AG04450 (cell line): ENCODE measurements at regions of chr7 and their contacts with region 1.

Region 1: DNA sequence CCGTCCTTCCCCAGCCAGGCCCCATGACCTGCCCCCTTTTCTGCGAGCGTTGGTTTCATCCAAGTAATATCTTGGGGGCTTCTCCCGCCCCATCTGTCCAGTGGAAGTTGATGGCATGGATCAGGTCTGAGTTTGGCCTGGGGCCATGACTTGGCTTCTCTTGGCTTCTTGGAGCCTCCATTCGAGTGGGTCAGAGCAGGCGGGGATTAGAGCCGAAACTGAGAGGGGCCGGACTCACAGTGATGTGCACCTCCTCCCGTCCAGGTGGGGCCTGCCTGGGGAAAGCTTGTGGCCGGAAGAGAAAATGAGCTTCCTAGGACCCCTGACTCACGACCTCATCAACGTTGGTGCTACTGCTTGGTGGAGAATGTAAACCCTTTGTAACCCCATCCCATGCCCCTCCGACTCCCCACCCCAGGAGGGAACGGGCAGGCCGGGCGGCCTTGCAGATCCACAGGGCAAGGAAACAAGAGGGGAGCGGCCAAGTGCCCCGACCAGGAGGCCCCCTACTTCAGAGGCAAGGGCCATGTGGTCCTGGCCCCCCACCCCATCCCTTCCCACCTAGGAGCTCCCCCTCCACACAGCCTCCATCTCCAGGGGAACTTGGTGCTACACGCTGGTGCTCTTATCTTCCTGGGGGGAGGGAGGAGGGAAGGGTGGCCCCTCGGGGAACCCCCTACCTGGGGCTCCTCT is 15.1 kb upstream of the LIMK1 start:
- DNase-seq: no peak
- H3K4me3 ChIP-seq: no peak overlapping the region
- H3K27ac ChIP-seq: no peak overlapping the region
- H3K27me3 ChIP-seq: no peaks in the 10 kb centered on the region
- CTCF ChIP-seq: no peak

Region 2: GRCh38 chr7:74002474-74003017 is 66.0 kb before region 1 on chr7:
- CTCF ChIA-PET with region 1: interaction called, 10 read pairs
- POLR2A ChIA-PET with region 1: no interaction called
- DNase-seq: peak; percentile 68
- H3K4me3 ChIP-seq: no peak overlapping the region
- H3K27ac ChIP-seq: peak overlapping the region; percentile 87
- H3K27me3 ChIP-seq: no peaks in the 10 kb centered on the region
- CTCF ChIP-seq: no peak

Region 3: GRCh38 chr7:74083117-74083876 is 14.8 kb after region 1 on chr7 and contains the start of gene LIMK1:
- CTCF ChIA-PET with region 1: interaction called, 18 read pairs
- POLR2A ChIA-PET with region 1: interaction called, 3 read pairs
- DNase-seq: peak; percentile 42
- H3K4me3 ChIP-seq: peak within 1 kb of the TSS; percentile 69
- H3K27ac ChIP-seq: peak within 1 kb of the TSS; percentile 73
- H3K27me3 ChIP-seq: no peaks in the 10 kb centered on the region
- CTCF ChIP-seq: no peak
- polyA plus RNA-seq, gene LIMK1: 33.0 and 52.8 TPM in 2 replicates

Region 4: DNA sequence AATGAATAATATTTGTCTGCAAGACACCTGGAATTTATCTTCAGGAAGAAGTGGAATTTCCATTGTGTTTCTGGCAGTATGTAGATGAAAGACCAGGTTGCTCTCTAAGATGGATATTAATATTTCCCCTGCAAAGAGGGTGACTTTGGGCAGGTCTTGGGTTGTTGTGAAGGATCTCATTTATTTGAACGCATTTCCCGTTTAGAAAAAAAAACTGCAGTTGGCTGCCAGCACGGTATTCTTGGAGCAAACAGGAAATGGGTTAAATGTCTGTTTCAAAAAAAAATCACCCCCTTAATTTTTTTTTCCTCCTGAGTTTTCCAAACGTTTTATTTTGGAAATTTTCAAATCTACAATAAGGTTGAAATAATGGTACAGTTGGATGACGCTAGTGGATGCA is 117.1 kb after region 1 on chr7:
- CTCF ChIA-PET with region 1: interaction called, 11 read pairs
- POLR2A ChIA-PET with region 1: no interaction called
- DNase-seq: no peak
- H3K4me3 ChIP-seq: no peak overlapping the region
- H3K27ac ChIP-seq: no peak overlapping the region
- H3K27me3 ChIP-seq: no peaks in the 10 kb centered on the region
- CTCF ChIP-seq: no peak

Region 5: DNA sequence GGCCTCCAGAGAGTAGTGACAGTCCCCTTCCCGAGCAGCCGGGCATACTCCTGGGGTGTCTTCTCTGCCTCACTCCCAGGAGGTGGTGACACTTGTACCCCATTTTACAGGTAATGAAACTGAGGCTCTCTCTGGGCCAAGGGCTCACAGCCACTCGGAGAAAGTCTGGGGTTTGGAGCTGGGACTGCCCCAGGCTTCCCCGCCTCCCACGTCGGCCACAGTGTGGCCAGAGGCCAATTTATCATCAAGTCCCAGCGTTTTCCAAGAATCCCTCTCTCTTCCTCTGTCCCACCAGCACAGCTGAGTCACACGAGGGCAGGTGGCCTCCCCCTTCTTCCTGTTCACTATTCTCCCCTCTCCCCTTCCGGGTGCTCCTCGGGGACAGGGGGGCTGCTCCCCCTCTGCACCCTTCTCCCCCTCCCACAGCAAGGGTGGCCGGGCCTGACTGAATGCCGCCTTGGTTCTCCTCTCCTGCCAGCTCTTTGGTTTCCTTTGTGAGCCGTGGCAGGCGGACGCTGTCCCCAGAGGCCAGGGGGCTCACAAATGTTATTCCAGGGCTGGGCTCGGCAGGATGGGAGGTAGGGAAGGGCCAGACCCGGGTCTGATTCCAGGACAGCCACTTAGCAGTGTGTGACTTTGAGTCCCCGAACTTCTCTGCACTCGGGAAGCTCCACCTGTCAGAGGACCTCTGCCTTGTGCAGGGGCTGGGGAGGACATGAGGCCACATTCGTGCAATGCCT is 238.4 kb after region 1 on chr7:
- CTCF ChIA-PET with region 1: interaction called, 10 read pairs
- POLR2A ChIA-PET with region 1: no interaction called
- DNase-seq: no peak
- H3K4me3 ChIP-seq: no peak overlapping the region
- H3K27ac ChIP-seq: peak overlapping the region; percentile 47
- H3K27me3 ChIP-seq: no peaks in the 10 kb centered on the region
- CTCF ChIP-seq: no peak

Region 6: GRCh38 chr7:75732764-75733630 is 1664.5 kb after region 1 on chr7:
- CTCF ChIA-PET with region 1: no interaction called
- POLR2A ChIA-PET with region 1: interaction called, 10 read pairs
- DNase-seq: no peak
- H3K4me3 ChIP-seq: 0 out of 2 replicates have a peak overlapping the region, but pooled peaks have one; percentile 15
- H3K27ac ChIP-seq: peak overlapping the region; percentile 90
- H3K27me3 ChIP-seq: no peaks in the 10 kb centered on the region
- CTCF ChIP-seq: no peak